CD8-positive, alpha-beta T cell (primary cell): ENCODE measurements at regions of chr4 and their contacts with region 1.

Region 1: DNA sequence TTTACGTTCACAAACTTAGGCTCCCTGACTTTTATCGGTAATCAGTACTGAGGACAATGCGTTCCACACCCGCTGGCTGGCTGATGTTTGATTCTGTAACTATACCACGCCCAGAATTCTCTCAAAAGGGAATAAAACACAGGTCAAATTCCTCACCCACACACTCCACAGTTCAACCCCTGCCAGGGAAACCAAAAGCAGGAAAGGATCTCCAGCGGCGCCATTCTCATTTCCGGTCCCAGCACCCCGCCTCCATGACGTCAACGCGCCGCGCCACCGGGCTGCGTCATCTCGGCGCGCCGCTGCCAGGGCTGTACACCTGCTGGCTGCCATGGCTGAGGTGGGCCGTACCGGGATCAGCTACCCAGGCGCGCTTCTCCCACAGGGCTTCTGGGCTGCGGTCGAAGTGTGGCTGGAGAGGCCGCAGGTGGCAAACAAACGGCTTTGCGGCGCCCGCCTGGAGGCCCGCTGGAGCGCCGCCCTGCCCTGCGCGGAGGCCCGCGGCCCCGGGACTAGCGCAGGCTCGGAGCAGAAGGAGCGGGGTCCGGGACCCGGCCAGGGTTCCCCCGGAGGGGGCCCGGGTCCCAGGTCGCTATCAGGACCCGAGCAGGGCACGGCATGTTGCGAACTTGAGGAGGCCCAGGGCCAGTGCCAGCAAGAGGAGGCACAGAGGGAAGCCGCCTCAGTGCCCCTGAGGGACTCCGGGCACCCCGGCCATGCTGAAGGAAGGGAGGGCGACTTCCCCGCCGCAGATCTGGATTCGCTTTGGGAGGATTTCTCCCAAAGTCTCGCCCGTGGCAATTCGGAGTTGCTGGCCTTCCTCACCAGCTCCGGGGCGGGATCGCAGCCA is at the starts of genes ACOX3 and TRMT44:
- DNase-seq: peak; percentile 90 to 99 (median 95)
- ATAC-seq: peak; percentile 89
- H3K4me3 ChIP-seq: peak within 1 kb of the TSS; percentile 86 to 98
- H3K4me3 Mint-ChIP-seq: peak within 1 kb of the TSS; percentile 100
- H3K27ac ChIP-seq: peak within 1 kb of the TSS; percentile 98
- H3K27ac Mint-ChIP-seq: peak within 1 kb of the TSS; percentile 100
- H3K4me1 ChIP-seq: peaks cover 47% of the 10 kb centered on the region
- H3K4me1 Mint-ChIP-seq: peaks cover 79% of the 10 kb centered on the region
- H3K27me3 ChIP-seq: no peaks in the 10 kb centered on the region
- H3K27me3 Mint-ChIP-seq: no peaks in the 10 kb centered on the region
- CTCF ChIP-seq: no peak
- total RNA-seq, gene ACOX3: 5.3 to 5.8 TPM
- total RNA-seq, gene TRMT44: 34.9 to 44.2 TPM

Region 2: DNA sequence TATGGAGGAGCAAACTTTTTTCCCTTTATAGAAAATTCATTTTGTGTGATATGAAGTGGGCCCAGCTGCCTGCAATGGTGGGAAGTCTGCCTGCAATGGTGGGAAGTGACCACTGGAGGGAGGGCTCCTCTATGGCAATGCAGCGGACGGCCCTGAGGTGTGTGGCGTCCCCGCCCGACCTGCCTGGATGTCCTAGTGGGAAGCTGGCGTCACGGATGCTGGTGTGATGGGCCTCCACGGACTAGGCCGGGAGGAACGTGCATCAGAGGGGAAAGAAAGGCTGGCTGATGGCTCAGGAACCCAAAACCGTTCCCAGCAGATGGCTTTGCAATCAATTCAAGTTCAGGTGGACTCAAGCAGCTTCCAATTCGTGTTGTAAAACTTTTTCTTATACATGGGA is 679.0 kb before region 1 on chr4:
- CTCF ChIA-PET with region 1: no interaction called
- POLR2A ChIA-PET with region 1: no interaction called
- intact Hi-C with region 1: loop called in 1 of 2 experiments (anchors 1 kb)
- DNase-seq: peak; percentile 24 to 73 (median 55)
- ATAC-seq: peak; percentile 64
- H3K4me3 ChIP-seq: no peak overlapping the region
- H3K4me3 Mint-ChIP-seq: peak overlapping the region; percentile 8
- H3K27ac ChIP-seq: peak overlapping the region in 1 of 2 experiments; percentile 31
- H3K27ac Mint-ChIP-seq: peak overlapping the region; percentile 84
- H3K4me1 ChIP-seq: peaks cover 35% of the 10 kb centered on the region
- H3K4me1 Mint-ChIP-seq: peaks cover 32% of the 10 kb centered on the region
- H3K27me3 ChIP-seq: no peaks in the 10 kb centered on the region
- H3K27me3 Mint-ChIP-seq: no peaks in the 10 kb centered on the region
- CTCF ChIP-seq: peak; percentile 51

Region 3: GRCh38 chr4:8228319-8229250 is 212.1 kb before region 1 on chr4:
- CTCF ChIA-PET with region 1: no interaction called
- POLR2A ChIA-PET with region 1: no interaction called
- intact Hi-C with region 1: loop called in 1 of 2 experiments (anchors 5 kb)
- DNase-seq: peak; percentile 47 to 90 (median 71)
- ATAC-seq: peak; percentile 80
- H3K4me3 ChIP-seq: peak overlapping the region; percentile 8 to 18
- H3K4me3 Mint-ChIP-seq: peak overlapping the region; percentile 65
- H3K27ac ChIP-seq: peak overlapping the region; percentile 6 to 16
- H3K27ac Mint-ChIP-seq: peak overlapping the region; percentile 90
- H3K4me1 ChIP-seq: peaks cover 59% of the 10 kb centered on the region
- H3K4me1 Mint-ChIP-seq: peaks cover 63% of the 10 kb centered on the region
- H3K27me3 ChIP-seq: peaks cover 0 to 2% of the 10 kb centered on the region in 2 experiments
- H3K27me3 Mint-ChIP-seq: no peaks in the 10 kb centered on the region
- CTCF ChIP-seq: no peak

Region 4: DNA sequence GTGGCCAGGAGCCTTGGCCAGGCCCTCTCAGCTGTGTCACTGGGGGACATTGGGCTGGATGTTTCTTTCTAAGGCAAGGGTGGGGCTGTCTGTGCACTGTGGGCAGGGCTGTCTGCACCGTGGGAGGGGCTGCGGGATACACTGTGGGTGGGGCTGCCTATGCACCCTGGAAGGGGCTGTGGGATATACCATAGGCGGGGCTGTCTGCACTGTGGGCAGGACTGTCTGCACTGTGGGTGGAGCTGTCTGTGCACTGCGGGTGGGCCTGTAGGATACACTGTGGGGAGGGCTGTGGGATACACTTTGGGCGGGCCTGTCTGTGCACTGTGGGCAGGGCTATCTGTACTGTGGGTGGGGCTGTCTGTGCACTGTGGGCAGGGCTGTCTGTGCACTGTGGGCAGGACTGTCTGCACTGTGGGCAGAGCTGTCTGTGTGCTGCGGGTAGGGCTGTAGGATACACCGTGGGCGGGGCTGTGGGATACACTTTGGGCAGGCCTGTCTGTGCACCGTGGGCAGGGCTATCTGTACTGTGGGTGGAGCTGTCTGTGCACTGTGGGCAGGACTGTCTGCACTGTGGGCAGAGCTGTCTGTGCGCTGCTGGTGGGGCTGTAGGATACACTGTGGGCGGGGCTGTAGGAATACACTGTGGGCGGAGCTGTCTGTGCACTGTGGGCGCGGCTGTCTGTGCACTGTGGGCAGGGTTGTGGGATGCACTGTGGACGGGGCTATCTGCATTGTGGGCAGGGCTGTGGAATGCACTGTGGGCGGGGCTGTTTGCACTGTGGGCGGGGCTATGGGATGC is 31.3 kb before region 1 on chr4:
- CTCF ChIA-PET with region 1: no interaction called
- POLR2A ChIA-PET with region 1: no interaction called
- intact Hi-C with region 1: loop called in 1 of 2 experiments (anchors 1 kb)
- DNase-seq: peak; percentile 43 to 95 (median 66)
- ATAC-seq: peak; percentile 86
- H3K4me3 ChIP-seq: no peak overlapping the region
- H3K4me3 Mint-ChIP-seq: no peak overlapping the region
- H3K27ac ChIP-seq: peak overlapping the region in 1 of 2 experiments; percentile 34
- H3K27ac Mint-ChIP-seq: peak overlapping the region; percentile 84
- H3K4me1 ChIP-seq: no peaks in the 10 kb centered on the region
- H3K4me1 Mint-ChIP-seq: peaks cover 14% of the 10 kb centered on the region
- H3K27me3 ChIP-seq: no peaks in the 10 kb centered on the region
- H3K27me3 Mint-ChIP-seq: no peaks in the 10 kb centered on the region
- CTCF ChIP-seq: no peak

Region 5: DNA sequence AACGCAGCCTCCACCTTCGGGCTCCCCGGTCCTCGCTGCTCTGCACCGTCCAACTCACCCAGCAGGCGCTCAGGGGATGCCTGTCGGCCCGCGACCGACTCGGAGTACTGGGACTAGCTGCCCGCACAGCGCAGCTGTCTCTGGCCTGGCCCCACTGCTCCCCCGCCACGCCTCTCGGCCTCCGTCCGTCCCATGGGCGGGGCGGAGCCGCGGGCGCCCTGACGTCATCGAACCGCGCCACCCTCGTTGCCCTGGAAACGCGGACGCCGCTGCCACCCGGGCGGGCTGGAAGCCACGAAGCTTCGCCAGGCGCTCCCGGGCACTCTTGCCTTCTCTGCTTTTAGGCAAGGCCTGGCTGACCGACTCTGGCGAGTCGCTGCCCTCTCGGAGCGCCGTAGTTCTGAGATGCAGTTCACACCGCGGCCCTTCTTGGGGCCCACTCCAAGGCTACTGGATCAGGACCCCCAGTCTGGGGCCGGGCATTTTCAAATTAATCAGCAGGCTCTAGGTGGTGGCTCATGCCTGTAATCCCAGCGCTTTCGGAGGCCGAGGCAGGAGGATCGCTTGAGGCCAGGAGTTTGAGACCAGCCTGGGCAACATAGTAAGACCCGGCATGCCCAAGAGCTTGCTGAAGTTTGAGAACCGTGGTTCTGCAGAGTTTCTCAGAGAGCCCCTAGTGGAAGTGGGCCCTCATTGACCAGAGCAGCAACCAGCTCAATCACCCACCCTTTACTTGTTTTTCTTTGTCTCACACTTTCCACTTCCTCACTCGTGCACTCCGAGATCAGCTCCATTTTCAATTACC is 12.2 kb before region 1 on chr4:
- CTCF ChIA-PET with region 1: interaction called, 5 read pairs
- POLR2A ChIA-PET with region 1: interaction called, 18 read pairs
- intact Hi-C with region 1: loop called (anchors 1 kb)
- DNase-seq: peak; percentile 84 to 98 (median 92)
- ATAC-seq: peak; percentile 91
- H3K4me3 ChIP-seq: peak overlapping the region; percentile 66 to 82
- H3K4me3 Mint-ChIP-seq: peak overlapping the region; percentile 95
- H3K27ac ChIP-seq: peak overlapping the region; percentile 40 to 71
- H3K27ac Mint-ChIP-seq: peak overlapping the region; percentile 94
- H3K4me1 ChIP-seq: peaks cover 14% of the 10 kb centered on the region
- H3K4me1 Mint-ChIP-seq: peaks cover 32% of the 10 kb centered on the region
- H3K27me3 ChIP-seq: no peaks in the 10 kb centered on the region
- H3K27me3 Mint-ChIP-seq: no peaks in the 10 kb centered on the region
- CTCF ChIP-seq: no peak

Region 6: GRCh38 chr4:9970392-9971013 is 1529.8 kb after region 1 on chr4:
- CTCF ChIA-PET with region 1: no interaction called
- POLR2A ChIA-PET with region 1: no interaction called
- intact Hi-C with region 1: no loop called
- DNase-seq: no peak
- ATAC-seq: no peak
- H3K4me3 ChIP-seq: no peak overlapping the region
- H3K4me3 Mint-ChIP-seq: no peak overlapping the region
- H3K27ac ChIP-seq: no peak overlapping the region
- H3K27ac Mint-ChIP-seq: no peak overlapping the region
- H3K4me1 ChIP-seq: no peaks in the 10 kb centered on the region
- H3K4me1 Mint-ChIP-seq: no peaks in the 10 kb centered on the region
- H3K27me3 ChIP-seq: no peaks in the 10 kb centered on the region
- H3K27me3 Mint-ChIP-seq: no peaks in the 10 kb centered on the region
- CTCF ChIP-seq: no peak